ENCODE measurements at regions of chr1 and their contacts with region 1.

Region 1: GRCh38 chr1:48851638-48852037 is 74.9 kb upstream of the BEND5 start:
- DNase-seq: no peak
- ATAC-seq: no peak
- H3K4me3 ChIP-seq: no peak overlapping the region
- H3K27ac ChIP-seq: no peak overlapping the region
- H3K4me1 ChIP-seq: no peaks in the 10 kb centered on the region
- H3K27me3 ChIP-seq: no peaks in the 10 kb centered on the region
- CTCF ChIP-seq: no peak
- POLR2A ChIP-seq: no peak
- RAD21 ChIP-seq: no peak

Region 2: GRCh38 chr1:48725331-48726046 is 126.1 kb before region 1 on chr1:
- CTCF ChIA-PET with region 1: no interaction called
- POLR2A ChIA-PET with region 1: interaction called, 22 read pairs
- dilution Hi-C with region 1: no loop called
- in situ Hi-C with region 1: no loop called
- intact Hi-C with region 1: no loop called
- DNase-seq: peak; percentile 7
- ATAC-seq: no peak
- H3K4me3 ChIP-seq: no peak overlapping the region
- H3K27ac ChIP-seq: no peak overlapping the region
- H3K4me1 ChIP-seq: no peaks in the 10 kb centered on the region
- H3K27me3 ChIP-seq: no peaks in the 10 kb centered on the region
- CTCF ChIP-seq: no peak
- POLR2A ChIP-seq: no peak
- RAD21 ChIP-seq: no peak